Dendritic cell treated with granulocyte-macrophage colony-stimulating factor and Interleukin-4, amounts not matched to agents 40 ng/mL and 50 ng/mL, for 4 days (primary cell): ENCODE measurements at regions of chr1 and their contacts with region 1.

Region 1: DNA sequence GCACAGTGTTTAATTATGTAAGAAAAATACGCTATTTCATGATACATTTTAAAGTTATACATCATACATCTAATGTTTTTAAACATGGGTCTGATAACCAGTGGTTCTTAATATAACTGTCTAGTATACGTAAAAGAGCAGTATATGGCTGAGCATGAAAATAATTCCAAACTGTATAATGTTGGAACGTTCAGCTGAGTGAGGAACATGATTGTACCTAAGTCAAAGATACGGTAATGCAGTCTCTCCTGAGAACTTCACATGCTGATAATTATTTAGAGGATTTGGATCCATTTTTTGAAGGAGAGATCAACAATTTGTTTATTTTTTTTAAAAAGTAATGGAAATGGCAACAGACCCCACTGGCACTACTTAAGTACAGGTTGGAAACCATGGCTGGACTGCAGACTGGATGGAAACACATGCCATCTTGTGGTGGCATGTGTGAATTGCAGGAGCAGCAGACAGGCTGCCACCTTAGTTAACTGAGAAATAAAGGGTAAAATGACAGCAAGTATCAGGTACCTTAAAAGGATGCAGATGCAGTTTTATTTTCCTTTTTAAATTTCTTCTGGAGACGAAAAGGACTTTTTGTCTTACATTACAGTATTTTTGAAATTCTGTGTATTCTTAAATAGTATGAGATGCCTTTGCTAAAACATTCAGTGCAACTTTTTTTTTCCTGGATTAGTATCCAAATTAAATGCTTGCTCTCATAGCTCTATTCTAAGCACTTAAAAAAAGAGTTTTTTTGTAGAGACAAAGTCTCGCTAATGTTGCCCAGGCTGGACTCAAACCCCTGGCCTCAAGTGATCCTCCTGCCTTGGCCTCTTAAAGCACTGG is 73.8 kb downstream of the MTR start:
- H3K4me3 Mint-ChIP-seq: no peak overlapping the region
- H3K27ac Mint-ChIP-seq: peak overlapping the region; percentile 92
- H3K4me1 Mint-ChIP-seq: peaks cover 40% of the 10 kb centered on the region
- H3K27me3 Mint-ChIP-seq: no peaks in the 10 kb centered on the region

Region 2: DNA sequence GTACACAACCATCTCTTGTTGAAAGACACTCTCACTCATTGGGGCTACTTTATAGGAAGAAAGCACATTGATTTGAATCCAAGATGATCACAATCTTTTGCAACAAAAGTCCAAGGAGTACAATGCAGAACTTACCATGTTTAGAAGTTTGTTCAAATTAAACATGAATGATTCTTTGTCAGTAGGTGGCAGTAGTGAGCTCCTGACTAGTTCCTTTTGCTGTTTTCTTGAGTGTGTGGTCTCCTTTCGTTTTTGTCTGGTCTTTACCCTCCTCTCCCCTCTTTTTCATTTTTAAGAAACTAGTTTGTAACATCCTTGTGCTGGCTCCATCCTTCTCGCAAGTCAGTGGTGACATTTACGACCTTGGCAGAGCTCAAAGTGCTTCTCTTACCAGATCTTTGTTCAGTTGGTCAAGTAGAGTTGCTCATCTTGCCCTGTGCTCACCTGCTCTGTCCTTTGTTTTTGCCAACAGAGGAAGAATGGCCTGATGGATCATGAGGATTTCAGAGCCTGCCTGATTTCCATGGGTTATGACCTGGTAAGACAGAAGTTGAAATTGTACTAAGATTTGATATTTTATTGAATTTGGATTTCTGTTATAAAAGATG is 109.5 kb before region 1 on chr1:
- intact Hi-C with region 1: loop called (anchors 2 kb)
- H3K4me3 Mint-ChIP-seq: no peak overlapping the region
- H3K27ac Mint-ChIP-seq: no peak overlapping the region
- H3K4me1 Mint-ChIP-seq: peaks cover 5% of the 10 kb centered on the region
- H3K27me3 Mint-ChIP-seq: no peaks in the 10 kb centered on the region

Region 3: DNA sequence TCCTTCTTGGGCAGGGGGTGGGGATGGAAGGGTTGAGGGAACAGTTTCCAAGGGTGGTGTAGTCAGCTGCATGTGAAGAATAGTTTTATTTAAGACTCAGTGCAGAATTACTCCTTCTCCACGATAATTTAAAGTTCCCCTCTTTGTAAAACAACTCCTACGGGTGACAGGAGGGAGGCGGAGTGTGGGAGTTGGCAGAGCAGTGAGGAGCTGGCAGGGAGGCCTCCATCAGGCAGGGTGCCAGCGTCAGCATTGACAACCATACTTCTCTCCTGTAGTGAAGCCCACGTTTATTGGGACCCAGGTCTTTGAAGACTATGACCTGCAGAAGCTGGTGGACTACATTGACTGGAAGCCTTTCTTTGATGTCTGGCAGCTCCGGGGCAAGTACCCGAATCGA is 20.1 kb after region 1 on chr1:
- intact Hi-C with region 1: no loop called
- H3K4me3 Mint-ChIP-seq: no peak overlapping the region
- H3K27ac Mint-ChIP-seq: no peak overlapping the region
- H3K4me1 Mint-ChIP-seq: peaks cover 6% of the 10 kb centered on the region
- H3K27me3 Mint-ChIP-seq: no peaks in the 10 kb centered on the region